CD4-positive, alpha-beta T cell (primary cell): ENCODE measurements at regions of chr18 and their contacts with region 1.

Region 1: GRCh38 chr18:40019797-40020392 is 1935.1 kb upstream of the PIK3C3 start:
- DNase-seq: no peak
- ATAC-seq: no peak
- H3K4me3 ChIP-seq: no peak overlapping the region
- H3K4me3 Mint-ChIP-seq: no peak overlapping the region
- H3K27ac ChIP-seq: no peak overlapping the region
- H3K27ac Mint-ChIP-seq: no peak overlapping the region
- H3K4me1 ChIP-seq: no peaks in the 10 kb centered on the region
- H3K4me1 Mint-ChIP-seq: no peaks in the 10 kb centered on the region
- H3K27me3 ChIP-seq: no peaks in the 10 kb centered on the region
- H3K27me3 Mint-ChIP-seq: no peaks in the 10 kb centered on the region
- CTCF ChIP-seq: no peak

Region 2: DNA sequence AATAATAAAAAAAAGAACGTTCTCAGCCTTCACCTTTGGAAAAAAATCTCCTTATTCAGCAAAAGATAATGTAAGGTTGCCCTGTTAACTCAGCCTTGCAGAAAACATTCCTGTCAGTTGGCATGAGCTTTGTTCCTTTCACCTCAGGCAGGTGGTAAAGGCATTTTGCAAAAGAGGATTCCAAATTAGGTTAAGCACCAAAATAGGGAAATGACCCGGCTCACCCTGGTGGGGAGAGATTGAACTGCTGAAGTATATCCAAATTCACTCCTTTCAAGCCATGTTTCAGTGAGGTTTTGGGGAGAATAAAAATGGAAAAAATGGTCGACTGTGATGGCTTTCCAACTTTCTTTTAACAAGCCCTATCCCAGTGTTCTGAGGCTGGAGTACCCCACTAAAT is 53.6 kb before region 1 on chr18:
- CTCF ChIA-PET with region 1: no interaction called
- POLR2A ChIA-PET with region 1: no interaction called
- intact Hi-C with region 1: loop called in 1 of 2 experiments (anchors 10 kb)
- DNase-seq: no peak
- ATAC-seq: no peak
- H3K4me3 ChIP-seq: no peak overlapping the region
- H3K4me3 Mint-ChIP-seq: no peak overlapping the region
- H3K27ac ChIP-seq: no peak overlapping the region
- H3K27ac Mint-ChIP-seq: no peak overlapping the region
- H3K4me1 ChIP-seq: no peaks in the 10 kb centered on the region
- H3K4me1 Mint-ChIP-seq: no peaks in the 10 kb centered on the region
- H3K27me3 ChIP-seq: no peaks in the 10 kb centered on the region
- H3K27me3 Mint-ChIP-seq: no peaks in the 10 kb centered on the region
- CTCF ChIP-seq: no peak

Region 3: GRCh38 chr18:40058811-40059570 is 39.1 kb after region 1 on chr18:
- CTCF ChIA-PET with region 1: no interaction called
- POLR2A ChIA-PET with region 1: no interaction called
- intact Hi-C with region 1: loop called in 1 of 2 experiments (anchors 2 kb)
- DNase-seq: no peak
- ATAC-seq: no peak
- H3K4me3 ChIP-seq: no peak overlapping the region
- H3K4me3 Mint-ChIP-seq: no peak overlapping the region
- H3K27ac ChIP-seq: no peak overlapping the region
- H3K27ac Mint-ChIP-seq: no peak overlapping the region
- H3K4me1 ChIP-seq: no peaks in the 10 kb centered on the region
- H3K4me1 Mint-ChIP-seq: no peaks in the 10 kb centered on the region
- H3K27me3 ChIP-seq: no peaks in the 10 kb centered on the region
- H3K27me3 Mint-ChIP-seq: no peaks in the 10 kb centered on the region
- CTCF ChIP-seq: no peak

Region 4: DNA sequence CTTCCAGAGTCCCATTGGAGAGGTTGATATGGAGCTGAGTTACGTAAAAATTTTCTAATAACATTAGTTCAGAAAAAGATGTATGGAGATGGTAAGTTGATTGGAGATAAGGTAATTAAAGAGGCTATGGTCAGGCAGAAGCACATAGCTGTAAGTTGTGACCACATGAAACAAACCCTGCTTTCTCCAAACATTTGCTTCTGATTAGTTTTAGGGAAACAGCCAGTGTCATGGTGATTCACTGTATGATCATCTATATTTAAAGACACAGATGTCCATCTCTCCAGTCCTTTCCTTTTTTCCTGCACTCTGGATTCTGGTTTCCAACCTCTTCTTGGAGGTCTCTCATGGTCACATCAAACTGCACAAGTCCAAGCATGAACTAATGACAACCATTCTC is 384.4 kb after region 1 on chr18:
- CTCF ChIA-PET with region 1: no interaction called
- POLR2A ChIA-PET with region 1: no interaction called
- intact Hi-C with region 1: no loop called
- DNase-seq: no peak
- ATAC-seq: no peak
- H3K4me3 ChIP-seq: no peak overlapping the region
- H3K4me3 Mint-ChIP-seq: no peak overlapping the region
- H3K27ac ChIP-seq: no peak overlapping the region
- H3K27ac Mint-ChIP-seq: no peak overlapping the region
- H3K4me1 ChIP-seq: no peaks in the 10 kb centered on the region
- H3K4me1 Mint-ChIP-seq: no peaks in the 10 kb centered on the region
- H3K27me3 ChIP-seq: no peaks in the 10 kb centered on the region
- H3K27me3 Mint-ChIP-seq: no peaks in the 10 kb centered on the region
- CTCF ChIP-seq: no peak